A549 (cell line): ENCODE measurements at regions of chr10 and their contacts with region 1.

Region 1: GRCh38 chr10:119608316-119609155 is 11.8 kb upstream of the TIAL1 start:
- DNase-seq: peak; percentile 58 to 62
- ATAC-seq: peak; percentile 99 to 100
- H3K4me3 ChIP-seq: no peak overlapping the region
- H3K27ac ChIP-seq: peak overlapping the region; percentile 2 to 27; a peak in 1 of 6 replicates
- H3K4me1 ChIP-seq: no peaks in the 10 kb centered on the region
- CTCF ChIP-seq: peak; percentile 90
- EP300 ChIP-seq: no peak
- POLR2A ChIP-seq: no peak
- RAD21 ChIP-seq: peak; percentile 94

Region 2: DNA sequence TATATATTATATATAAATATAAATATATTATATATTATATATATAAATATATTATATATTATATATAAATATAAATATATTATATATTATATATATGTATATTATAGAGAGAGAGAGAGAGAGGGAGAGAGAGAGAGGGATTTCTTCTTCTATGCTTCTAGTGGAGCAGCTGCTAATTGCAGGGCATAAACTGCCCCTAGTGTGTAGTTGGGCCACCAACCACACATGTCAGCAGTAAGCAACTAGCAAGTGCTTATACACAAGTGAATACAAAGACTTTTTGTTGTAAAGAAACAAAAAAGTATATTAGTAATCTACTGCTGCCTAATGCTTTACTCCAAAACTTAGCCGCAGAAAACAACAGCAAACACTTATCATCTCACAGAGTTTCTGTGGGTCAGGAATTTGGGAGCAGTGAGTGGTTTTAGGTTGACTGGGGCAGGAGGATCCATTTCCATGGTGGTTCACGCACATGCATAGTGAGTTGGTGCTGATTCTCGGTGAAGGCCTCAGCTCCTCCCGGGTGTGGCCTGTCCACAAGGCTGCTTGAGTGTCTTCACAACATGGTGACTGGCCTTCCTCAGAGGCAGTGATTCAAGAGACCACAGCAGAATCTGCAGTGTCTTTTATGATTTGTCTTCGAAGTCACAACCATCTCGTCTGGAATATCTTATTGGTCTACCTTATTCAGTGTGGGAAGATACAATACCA is 17.2 kb after region 1 on chr10:
- CTCF ChIA-PET with region 1: interaction called, 35 read pairs
- POLR2A ChIA-PET with region 1: no interaction called
- DNase-seq: no peak
- ATAC-seq: peak; percentile 69 to 74; a peak in 5 of 6 replicates
- H3K4me3 ChIP-seq: no peak overlapping the region
- H3K27ac ChIP-seq: no peak overlapping the region
- H3K4me1 ChIP-seq: peaks cover 1% of the 10 kb centered on the region
- CTCF ChIP-seq: no peak
- EP300 ChIP-seq: no peak
- POLR2A ChIP-seq: no peak
- RAD21 ChIP-seq: no peak

Region 3: GRCh38 chr10:119650692-119651513 is 42.4 kb after region 1 on chr10 and contains the start of gene BAG3:
- CTCF ChIA-PET with region 1: interaction called, 69 read pairs
- POLR2A ChIA-PET with region 1: interaction called, 6 read pairs
- DNase-seq: peak; percentile 80 to 88
- ATAC-seq: peak; percentile 79
- H3K4me3 ChIP-seq: peak within 1 kb of the TSS; percentile 88
- H3K27ac ChIP-seq: peak within 1 kb of the TSS; percentile 89 to 96
- H3K4me1 ChIP-seq: peaks cover 27% of the 10 kb centered on the region
- CTCF ChIP-seq: no peak
- EP300 ChIP-seq: no peak; a peak in 1 of 5 replicates
- POLR2A ChIP-seq: peak; percentile 66
- RAD21 ChIP-seq: no peak; a peak in 1 of 5 replicates
- polyA plus RNA-seq, gene BAG3: 10.7 and 18.3 TPM in 2 replicates

Region 4: GRCh38 chr10:119680050-119680449 is 71.5 kb after region 1 on chr10:
- CTCF ChIA-PET with region 1: interaction called, 12 read pairs
- POLR2A ChIA-PET with region 1: no interaction called
- DNase-seq: peak; percentile 70 to 84
- ATAC-seq: peak; percentile 45 to 66
- H3K4me3 ChIP-seq: 0 out of 3 replicates have a peak overlapping the region, but pooled peaks have one; percentile 14
- H3K27ac ChIP-seq: peak overlapping the region; percentile 88 to 93
- H3K4me1 ChIP-seq: peaks cover 70% of the 10 kb centered on the region
- CTCF ChIP-seq: no peak
- EP300 ChIP-seq: no peak; a peak in 1 of 5 replicates
- POLR2A ChIP-seq: no peak
- RAD21 ChIP-seq: no peak

Region 5: GRCh38 chr10:119693262-119693957 is 84.9 kb after region 1 on chr10:
- CTCF ChIA-PET with region 1: interaction called, 11 read pairs
- POLR2A ChIA-PET with region 1: interaction called, 4 read pairs
- DNase-seq: no peak
- ATAC-seq: no peak
- H3K4me3 ChIP-seq: no peak overlapping the region
- H3K27ac ChIP-seq: no peak overlapping the region
- H3K4me1 ChIP-seq: no peaks in the 10 kb centered on the region
- CTCF ChIP-seq: no peak
- EP300 ChIP-seq: no peak
- POLR2A ChIP-seq: no peak
- RAD21 ChIP-seq: no peak

Region 6: GRCh38 chr10:119725828-119726675 is 117.5 kb after region 1 on chr10 and contains the start of gene INPP5F:
- CTCF ChIA-PET with region 1: interaction called, 14 read pairs
- POLR2A ChIA-PET with region 1: no interaction called
- DNase-seq: peak; percentile 96 to 98
- ATAC-seq: peak; percentile 90 to 96
- H3K4me3 ChIP-seq: peak within 1 kb of the TSS; percentile 82
- H3K27ac ChIP-seq: peak within 1 kb of the TSS; percentile 77 to 96
- H3K4me1 ChIP-seq: peaks cover 13% of the 10 kb centered on the region; the same call in 2 of the 3 replicates
- CTCF ChIP-seq: peak; percentile 24; the same call in 1 of the 3 replicates
- EP300 ChIP-seq: no peak
- POLR2A ChIP-seq: no peak
- RAD21 ChIP-seq: no peak; a peak in 1 of 5 replicates
- polyA plus RNA-seq, gene INPP5F: 7.7 and 8.3 TPM in 2 replicates

Region 7: GRCh38 chr10:119859420-119860258 is 251.1 kb after region 1 on chr10:
- CTCF ChIA-PET with region 1: interaction called, 52 read pairs
- POLR2A ChIA-PET with region 1: no interaction called
- DNase-seq: peak; percentile 24 to 47
- ATAC-seq: peak in 1 of 2 experiments; percentile 63; a peak in 3 of 6 replicates
- H3K4me3 ChIP-seq: no peak overlapping the region
- H3K27ac ChIP-seq: no peak overlapping the region
- H3K4me1 ChIP-seq: peaks cover 15% of the 10 kb centered on the region
- CTCF ChIP-seq: peak; percentile 80
- EP300 ChIP-seq: no peak
- POLR2A ChIP-seq: no peak
- RAD21 ChIP-seq: peak; percentile 68 to 75

Region 8: DNA sequence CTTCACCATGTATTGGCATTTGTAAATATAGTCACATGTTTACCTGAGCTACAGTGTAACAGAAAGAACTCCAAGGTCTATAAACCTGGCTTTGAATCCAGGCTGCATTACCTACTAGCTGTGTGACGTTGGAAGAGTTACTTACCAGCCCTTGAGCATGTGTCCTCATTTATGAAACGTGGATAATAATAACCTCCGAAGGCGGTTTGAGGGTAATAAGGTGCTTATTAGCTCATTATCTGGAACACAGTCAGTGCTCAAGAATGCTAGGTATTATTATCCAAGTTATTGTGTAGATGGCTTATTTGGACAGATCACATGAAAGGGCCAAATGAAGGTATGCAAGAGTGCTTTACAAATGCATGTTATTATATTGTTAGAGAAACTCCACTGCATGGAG is 348.9 kb after region 1 on chr10:
- CTCF ChIA-PET with region 1: no interaction called
- POLR2A ChIA-PET with region 1: no interaction called
- DNase-seq: no peak
- ATAC-seq: no peak
- H3K4me3 ChIP-seq: no peak overlapping the region
- H3K27ac ChIP-seq: no peak overlapping the region
- H3K4me1 ChIP-seq: no peaks in the 10 kb centered on the region
- CTCF ChIP-seq: no peak
- EP300 ChIP-seq: no peak
- POLR2A ChIP-seq: no peak
- RAD21 ChIP-seq: no peak